MCF 10A (cell line): ENCODE measurements at regions of chr11 and their contacts with region 1.

Region 1: GRCh38 chr11:56910785-56911184 is 77.9 kb upstream of the OR5AK2 start:
- DNase-seq: peak; percentile 43
- H3K4me3 Mint-ChIP-seq: no peak overlapping the region
- H3K27ac Mint-ChIP-seq: peak overlapping the region; percentile 42
- H3K4me1 Mint-ChIP-seq: peaks cover 20% of the 10 kb centered on the region
- H3K27me3 Mint-ChIP-seq: no peaks in the 10 kb centered on the region
- CTCF ChIP-seq: no peak

Region 2: DNA sequence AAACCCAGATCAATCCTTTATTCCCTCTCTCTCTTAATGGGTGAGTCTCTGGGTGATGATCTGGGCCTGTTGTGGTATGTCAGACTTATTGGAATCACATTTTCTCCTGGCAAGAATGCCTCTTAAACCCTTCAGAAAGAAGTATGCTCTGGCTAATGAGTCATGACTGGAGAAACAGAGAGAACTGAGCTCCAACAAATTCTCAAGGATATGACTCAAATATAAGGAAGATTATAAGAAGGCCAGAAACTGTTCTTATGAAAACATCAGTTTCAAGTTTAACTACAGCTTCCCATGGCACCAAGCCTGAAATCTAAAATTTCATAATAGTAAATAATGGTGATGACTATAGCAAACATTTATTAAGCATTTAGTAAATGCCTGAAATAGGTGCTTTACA is 161.9 kb after region 1 on chr11:
- CTCF ChIA-PET with region 1: no interaction called
- POLR2A ChIA-PET with region 1: interaction called, 4 read pairs
- intact Hi-C with region 1: loop called (anchors 10 kb)
- DNase-seq: peak; percentile 96
- H3K4me3 Mint-ChIP-seq: no peak overlapping the region
- H3K27ac Mint-ChIP-seq: peak overlapping the region; percentile 94
- H3K4me1 Mint-ChIP-seq: peaks cover 26% of the 10 kb centered on the region
- H3K27me3 Mint-ChIP-seq: no peaks in the 10 kb centered on the region
- CTCF ChIP-seq: no peak